B cell (primary cell): ENCODE measurements at regions of chr1 and their contacts with region 1.

Region 1: GRCh38 chr1:32291708-32292492 is at the start of gene HDAC1:
- DNase-seq: peak; percentile 96
- ATAC-seq: peak; percentile 98
- H3K4me3 ChIP-seq: peak within 1 kb of the TSS; percentile 77 to 98 (median 88)
- H3K4me3 Mint-ChIP-seq: peak within 1 kb of the TSS; percentile 100
- H3K27ac ChIP-seq: peak within 1 kb of the TSS; percentile 81 to 87
- H3K27ac Mint-ChIP-seq: peak within 1 kb of the TSS; percentile 99
- H3K4me1 ChIP-seq: peaks cover 41 to 42% of the 10 kb centered on the region in 2 donors
- H3K4me1 Mint-ChIP-seq: peaks cover 39% of the 10 kb centered on the region
- H3K27me3 ChIP-seq: no peaks in the 10 kb centered on the region
- H3K27me3 Mint-ChIP-seq: no peaks in the 10 kb centered on the region
- CTCF ChIP-seq: peak; percentile 1
- total RNA-seq, gene HDAC1: 200 and 205 TPM in 2 replicates

Region 2: GRCh38 chr1:32205401-32206370 is 86.2 kb before region 1 on chr1 and contains the start of gene IQCC:
- CTCF ChIA-PET with region 1: no interaction called
- POLR2A ChIA-PET with region 1: interaction called, 6 read pairs
- intact Hi-C with region 1: loop called (anchors 5 kb)
- DNase-seq: peak; percentile 90
- ATAC-seq: peak; percentile 62
- H3K4me3 ChIP-seq: peak within 1 kb of the TSS in 4 of 5 experiments; percentile 59 to 78 (median 62)
- H3K4me3 Mint-ChIP-seq: peak within 1 kb of the TSS; percentile 88
- H3K27ac ChIP-seq: peak within 1 kb of the TSS in 1 of 2 donors; percentile 46
- H3K27ac Mint-ChIP-seq: peak within 1 kb of the TSS; percentile 68
- H3K4me1 ChIP-seq: peaks cover 42 to 58% of the 10 kb centered on the region in 2 donors
- H3K4me1 Mint-ChIP-seq: peaks cover 60% of the 10 kb centered on the region
- H3K27me3 ChIP-seq: no peaks in the 10 kb centered on the region
- H3K27me3 Mint-ChIP-seq: no peaks in the 10 kb centered on the region
- CTCF ChIP-seq: no peak
- total RNA-seq, gene IQCC: 2.0 and 2.1 TPM in 2 replicates

Region 3: DNA sequence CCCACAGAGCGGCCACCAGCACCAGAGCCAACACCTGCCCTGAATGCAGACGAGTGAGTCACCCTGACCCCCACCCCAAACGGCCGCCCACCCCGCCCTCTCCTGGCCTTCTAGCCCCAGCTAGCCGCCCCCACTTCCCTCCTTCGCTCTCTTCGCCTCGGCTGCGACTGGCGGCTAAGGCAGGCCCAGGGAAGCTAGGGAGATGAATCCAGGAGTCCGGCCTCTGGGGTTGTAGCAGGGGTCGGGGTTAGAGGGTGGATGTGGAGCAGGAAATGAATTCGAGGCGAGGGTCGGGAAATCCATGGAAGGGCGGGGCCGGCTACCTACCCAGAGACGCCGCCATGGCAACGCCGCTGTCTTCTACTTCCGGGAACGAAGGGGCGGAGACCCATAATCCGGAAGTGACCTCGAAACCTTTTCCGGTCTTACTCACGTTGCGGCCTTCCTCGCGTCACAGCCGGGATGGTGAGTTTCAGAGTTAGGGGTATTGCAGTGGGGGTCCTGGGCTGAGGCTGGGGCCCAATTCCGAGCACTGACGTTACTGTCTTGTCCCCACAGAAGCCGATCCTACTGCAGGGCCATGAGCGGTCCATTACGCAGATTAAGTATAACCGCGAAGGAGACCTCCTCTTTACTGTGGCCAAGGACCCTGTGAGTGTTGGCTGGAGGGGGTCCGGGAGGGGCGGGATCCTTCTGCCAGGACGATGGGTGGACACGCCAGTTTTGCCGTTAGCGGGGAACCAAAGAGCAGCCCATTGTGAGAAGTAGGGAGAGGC is 69.7 kb before region 1 on chr1 and contains the starts of genes EIF3I and TMEM234:
- CTCF ChIA-PET with region 1: interaction called, 29 read pairs
- POLR2A ChIA-PET with region 1: no interaction called
- intact Hi-C with region 1: loop called (anchors 1 kb)
- DNase-seq: peak; percentile 94
- ATAC-seq: peak; percentile 86
- H3K4me3 ChIP-seq: peak within 1 kb of the TSS; percentile 61 to 99 (median 93)
- H3K4me3 Mint-ChIP-seq: peak within 1 kb of the TSS; percentile 97
- H3K27ac ChIP-seq: peak within 1 kb of the TSS; percentile 72 to 94
- H3K27ac Mint-ChIP-seq: peak within 1 kb of the TSS; percentile 98
- H3K4me1 ChIP-seq: peaks cover 28 to 30% of the 10 kb centered on the region in 2 donors
- H3K4me1 Mint-ChIP-seq: peaks cover 43% of the 10 kb centered on the region
- H3K27me3 ChIP-seq: no peaks in the 10 kb centered on the region
- H3K27me3 Mint-ChIP-seq: no peaks in the 10 kb centered on the region
- CTCF ChIP-seq: no peak
- total RNA-seq, gene EIF3I: 87.0 and 91.0 TPM in 2 replicates
- total RNA-seq, gene TMEM234: 50.4 and 60.8 TPM in 2 replicates

Region 4: GRCh38 chr1:32255072-32256071 is 36.5 kb before region 1 on chr1:
- CTCF ChIA-PET with region 1: interaction called, 55 read pairs
- POLR2A ChIA-PET with region 1: interaction called, 34 read pairs
- intact Hi-C with region 1: loop called (anchors 1 kb)
- DNase-seq: no peak
- ATAC-seq: no peak
- H3K4me3 ChIP-seq: no peak overlapping the region
- H3K4me3 Mint-ChIP-seq: peak overlapping the region; percentile 68
- H3K27ac ChIP-seq: peak overlapping the region in 1 of 2 donors; percentile 50
- H3K27ac Mint-ChIP-seq: peak overlapping the region; percentile 88
- H3K4me1 ChIP-seq: peaks cover 61 to 70% of the 10 kb centered on the region in 2 donors
- H3K4me1 Mint-ChIP-seq: peaks cover 60% of the 10 kb centered on the region
- H3K27me3 ChIP-seq: no peaks in the 10 kb centered on the region
- H3K27me3 Mint-ChIP-seq: no peaks in the 10 kb centered on the region
- CTCF ChIP-seq: no peak

Region 5: DNA sequence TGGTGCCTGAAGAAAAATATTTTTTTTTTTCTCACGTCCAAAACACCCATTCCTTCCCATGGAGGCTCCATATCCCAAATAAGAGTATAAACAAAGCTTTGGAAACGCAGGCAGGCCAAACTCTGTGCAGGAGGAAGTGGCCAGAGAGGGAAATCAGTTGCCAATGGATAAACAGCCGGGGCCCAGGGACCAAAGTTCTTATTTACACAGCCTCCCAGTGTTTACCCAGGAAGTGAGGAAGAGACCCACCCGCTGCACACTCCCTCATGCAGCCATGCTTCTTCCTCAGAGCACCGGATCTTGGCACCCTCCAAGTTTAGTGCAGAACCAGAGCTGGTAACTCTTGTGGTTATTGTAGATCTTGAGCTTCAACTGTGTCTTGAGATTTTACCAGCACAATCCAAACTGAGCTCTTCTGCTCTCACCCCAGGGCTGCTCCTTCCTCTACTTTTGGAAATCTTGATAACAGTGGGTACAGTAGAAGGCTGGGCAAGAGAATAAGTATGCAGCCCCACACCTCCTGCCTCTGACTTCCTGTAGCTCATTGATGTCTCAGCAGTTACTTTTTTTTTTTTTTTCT is 29.9 kb after region 1 on chr1:
- CTCF ChIA-PET with region 1: interaction called, 11 read pairs
- POLR2A ChIA-PET with region 1: interaction called, 9 read pairs
- intact Hi-C with region 1: loop called (anchors 1 kb)
- DNase-seq: no peak
- ATAC-seq: peak; percentile 35
- H3K4me3 ChIP-seq: peak overlapping the region in 3 of 5 experiments; percentile 5 to 34 (median 12)
- H3K4me3 Mint-ChIP-seq: peak overlapping the region; percentile 80
- H3K27ac ChIP-seq: peak overlapping the region; percentile 59 to 63
- H3K27ac Mint-ChIP-seq: peak overlapping the region; percentile 89
- H3K4me1 ChIP-seq: peaks cover 70 to 78% of the 10 kb centered on the region in 2 donors
- H3K4me1 Mint-ChIP-seq: peaks cover 57% of the 10 kb centered on the region
- H3K27me3 ChIP-seq: no peaks in the 10 kb centered on the region
- H3K27me3 Mint-ChIP-seq: no peaks in the 10 kb centered on the region
- CTCF ChIP-seq: no peak